ENCODE measurements at regions of chr6 and their contacts with region 1.

Region 1: GRCh38 chr6:46848684-46849360 is 55.6 kb downstream of the MEP1A start:
- DNase-seq: peak; percentile 61 to 96
- H3K4me3 ChIP-seq: peak overlapping the region in 2 of 4 experiments; percentile 16 to 49; a peak in 3 of 8 replicates
- H3K27ac ChIP-seq: no peak overlapping the region
- H3K4me1 ChIP-seq: no peaks in the 10 kb centered on the region
- H3K27me3 ChIP-seq: peaks cover 0 to 3% (median 0%) of the 10 kb centered on the region in 4 experiments; a peak in 1 of 7 replicates
- CTCF ChIP-seq: peak; percentile 79 to 93 (median 92)
- EP300 ChIP-seq: peak in 1 of 2 experiments; percentile 32; a peak in 1 of 3 replicates
- POLR2A ChIP-seq: no peak
- RAD21 ChIP-seq: peak; percentile 95 to 97

Region 2: DNA sequence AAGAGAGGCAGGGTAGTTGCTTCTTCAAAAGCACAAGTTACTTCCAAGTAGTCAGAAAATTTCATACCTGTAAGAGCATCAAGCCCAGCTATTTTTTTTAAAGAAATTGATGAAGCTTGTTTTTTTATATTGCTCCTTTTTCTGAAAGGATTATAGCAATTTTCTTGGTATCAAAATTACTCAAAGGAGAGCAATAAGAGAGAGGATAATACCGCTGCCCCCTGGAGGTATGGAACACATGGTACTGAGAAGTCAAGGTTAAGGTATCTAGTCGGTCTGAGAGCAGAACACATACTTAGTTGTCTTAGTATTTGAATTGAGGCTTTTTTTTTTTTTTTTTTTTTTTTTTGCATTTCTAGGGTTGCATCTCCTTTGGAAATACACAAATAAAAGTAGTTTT is 13.6 kb after region 1 on chr6:
- CTCF ChIA-PET with region 1: interaction called, 13 read pairs
- POLR2A ChIA-PET with region 1: no interaction called
- DNase-seq: no peak
- H3K4me3 ChIP-seq: no peak overlapping the region
- H3K27ac ChIP-seq: no peak overlapping the region
- H3K4me1 ChIP-seq: peaks cover 0 to 3% (median 0%) of the 10 kb centered on the region in 4 experiments; a peak in 1 of 7 replicates
- H3K27me3 ChIP-seq: no peaks in the 10 kb centered on the region
- CTCF ChIP-seq: peak in 1 of 3 experiments; percentile 42; a peak in 1 of 4 replicates
- EP300 ChIP-seq: no peak
- POLR2A ChIP-seq: no peak
- RAD21 ChIP-seq: no peak

Region 3: GRCh38 chr6:46983007-46983411 is 134.2 kb after region 1 on chr6:
- CTCF ChIA-PET with region 1: interaction called, 12 read pairs
- POLR2A ChIA-PET with region 1: no interaction called
- DNase-seq: no peak
- H3K4me3 ChIP-seq: no peak overlapping the region
- H3K27ac ChIP-seq: no peak overlapping the region
- H3K4me1 ChIP-seq: 0 out of 7 replicates have a peak, but pooled peaks cover 0 to 2% (median 0%) of the 10 kb centered on the region in 4 experiments
- H3K27me3 ChIP-seq: no peaks in the 10 kb centered on the region; a peak in 1 of 7 replicates
- CTCF ChIP-seq: peak in 2 of 3 experiments; percentile 23 to 42; a peak in 2 of 4 replicates
- EP300 ChIP-seq: no peak
- POLR2A ChIP-seq: no peak
- RAD21 ChIP-seq: peak; percentile 44 to 49

Region 4: DNA sequence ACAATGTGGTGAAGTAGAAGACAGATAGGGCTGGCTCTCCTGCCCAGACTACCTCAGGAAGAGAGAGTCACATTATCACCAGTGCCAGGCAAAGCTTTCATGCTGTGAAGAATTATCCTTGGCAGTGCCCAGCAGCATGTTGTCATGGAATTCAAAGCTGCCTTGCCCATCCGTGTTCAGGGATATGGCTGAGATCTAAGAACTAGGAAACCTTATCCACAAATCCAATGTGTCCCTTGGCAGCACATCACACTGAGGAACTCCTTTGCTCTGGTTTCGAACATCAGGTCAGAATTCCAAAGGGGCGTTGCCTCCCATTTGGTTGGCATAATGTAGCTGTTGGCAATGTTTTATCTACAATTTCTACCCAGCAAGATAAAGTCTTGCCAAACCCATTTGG is 140.6 kb after region 1 on chr6:
- CTCF ChIA-PET with region 1: interaction called, 14 read pairs
- POLR2A ChIA-PET with region 1: no interaction called
- DNase-seq: no peak
- H3K4me3 ChIP-seq: no peak overlapping the region
- H3K27ac ChIP-seq: no peak overlapping the region
- H3K4me1 ChIP-seq: 0 out of 7 replicates have a peak, but pooled peaks cover 0 to 2% (median 0%) of the 10 kb centered on the region in 4 experiments
- H3K27me3 ChIP-seq: no peaks in the 10 kb centered on the region; a peak in 1 of 7 replicates
- CTCF ChIP-seq: no peak
- EP300 ChIP-seq: no peak
- POLR2A ChIP-seq: no peak
- RAD21 ChIP-seq: no peak

Region 5: DNA sequence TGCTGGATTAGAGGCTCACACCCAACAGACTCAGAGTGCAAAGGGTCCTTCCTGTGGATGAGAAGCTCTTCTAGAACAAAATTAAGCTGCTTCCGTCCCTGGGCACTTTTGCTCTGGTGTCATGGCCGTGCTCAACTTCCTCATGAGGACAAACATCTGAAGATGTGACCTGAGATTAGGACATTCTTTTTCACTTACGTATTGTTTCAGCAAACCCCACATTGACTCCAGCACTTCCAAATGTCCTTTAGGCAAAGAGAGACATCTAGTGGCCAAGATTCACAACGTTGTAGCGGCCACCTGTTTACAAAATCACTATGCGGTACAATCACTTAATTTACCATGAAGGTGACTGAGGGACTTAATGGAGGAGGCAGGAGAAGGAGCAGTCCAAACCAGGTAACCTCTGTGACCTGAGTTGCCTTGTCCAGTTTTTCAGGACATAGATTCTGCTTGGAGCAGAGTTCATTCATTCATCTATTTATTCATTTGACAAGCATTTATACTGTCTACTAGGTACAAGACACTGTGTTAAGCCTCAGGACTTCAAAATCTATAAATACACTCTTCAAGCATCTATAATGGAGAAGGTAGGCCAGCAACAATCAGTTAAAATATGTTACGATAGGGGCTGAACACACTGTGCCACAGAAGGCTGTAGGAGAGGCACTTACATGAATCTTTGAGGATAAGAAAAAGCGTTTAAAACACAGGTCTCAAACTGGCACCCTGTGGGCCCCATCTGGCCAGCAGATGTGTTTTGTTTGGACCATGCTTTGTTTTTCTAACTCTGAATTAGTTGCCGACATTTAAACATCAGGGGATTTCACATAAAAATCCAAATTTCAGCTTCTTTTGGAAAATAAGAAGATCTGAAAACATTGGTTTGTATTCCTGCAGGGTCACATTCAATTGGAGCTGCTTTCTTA is 198.9 kb after region 1 on chr6:
- CTCF ChIA-PET with region 1: interaction called, 17 read pairs
- POLR2A ChIA-PET with region 1: no interaction called
- DNase-seq: peak; percentile 56 to 59
- H3K4me3 ChIP-seq: no peak overlapping the region
- H3K27ac ChIP-seq: no peak overlapping the region
- H3K4me1 ChIP-seq: no peaks in the 10 kb centered on the region
- H3K27me3 ChIP-seq: no peaks in the 10 kb centered on the region
- CTCF ChIP-seq: peak in 2 of 3 experiments; percentile 71 to 84; a peak in 3 of 4 replicates
- EP300 ChIP-seq: no peak
- POLR2A ChIP-seq: no peak
- RAD21 ChIP-seq: peak; percentile 91 to 92

Measured in H1 (cell line).